HepG2 (cell line): ENCODE measurements at regions of chr6 and their contacts with region 1.

Region 1: DNA sequence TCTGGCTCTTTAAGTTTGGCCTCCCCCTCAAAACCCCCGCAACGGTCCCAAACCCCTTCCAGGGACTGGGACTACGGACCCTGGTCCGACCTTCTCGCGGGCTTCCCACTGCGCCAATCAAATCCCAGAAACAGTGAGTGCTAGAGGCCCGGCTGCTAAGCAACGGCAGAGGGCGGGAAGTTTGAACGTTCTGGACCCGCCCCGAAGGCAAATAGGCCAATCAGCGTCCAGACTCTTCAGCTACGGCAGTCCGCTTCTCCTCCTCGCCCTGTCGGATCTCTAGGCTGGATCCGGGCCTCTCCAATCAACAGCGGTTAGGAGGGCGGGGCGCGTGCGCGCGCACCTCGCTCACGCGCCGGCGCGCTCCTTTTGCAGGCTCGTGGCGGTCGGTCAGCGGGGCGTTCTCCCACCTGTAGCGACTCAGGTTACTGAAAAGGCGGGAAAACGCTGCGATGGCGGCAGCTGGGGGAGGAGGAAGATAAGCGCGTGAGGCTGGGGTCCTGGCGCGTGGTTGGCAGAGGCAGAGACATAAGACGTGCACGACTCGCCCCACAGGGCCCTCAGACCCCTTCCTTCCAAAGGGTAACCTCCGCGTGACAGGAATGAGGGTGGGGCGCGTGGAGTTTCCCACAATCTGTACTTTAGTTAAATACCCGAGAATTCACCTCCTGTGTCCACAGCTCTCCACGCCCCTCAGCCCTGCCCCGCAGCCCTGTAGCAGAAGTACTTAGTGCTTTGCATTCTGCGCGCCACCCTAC is at the start of gene MSH5:
- DNase-seq: peak; percentile 100
- ATAC-seq: peak; percentile 74
- H3K4me3 ChIP-seq: peak within 1 kb of the TSS; percentile 44 to 92 (median 92)
- H3K27ac ChIP-seq: peak within 1 kb of the TSS; percentile 99
- H3K4me1 ChIP-seq: peaks cover 50% of the 10 kb centered on the region
- H3K27me3 ChIP-seq: no peaks in the 10 kb centered on the region; a peak in 1 of 5 replicates
- CTCF ChIP-seq: no peak
- EP300 ChIP-seq: no peak; a peak in 1 of 4 replicates
- POLR2A ChIP-seq: peak in 1 of 2 experiments; percentile 45; a peak in 2 of 4 replicates
- RAD21 ChIP-seq: peak; percentile 51
- total RNA-seq, gene MSH5: 2.5 and 10.2 TPM in 2 replicates

Region 2: GRCh38 chr6:31680840-31681671 is 58.8 kb before region 1 on chr6 and contains the start of gene LY6G5C:
- CTCF ChIA-PET with region 1: no interaction called
- POLR2A ChIA-PET with region 1: interaction called, 13 read pairs
- in situ Hi-C with region 1: no loop called
- intact Hi-C with region 1: no loop called
- DNase-seq: peak; percentile 72
- ATAC-seq: peak; percentile 67
- H3K4me3 ChIP-seq: peak within 1 kb of the TSS in 1 of 3 experiments; percentile 22; a peak in 1 of 6 replicates
- H3K27ac ChIP-seq: no peak within 1 kb of the TSS
- H3K4me1 ChIP-seq: peaks cover 26% of the 10 kb centered on the region
- H3K27me3 ChIP-seq: no peaks in the 10 kb centered on the region
- CTCF ChIP-seq: peak; percentile 97
- EP300 ChIP-seq: no peak
- POLR2A ChIP-seq: no peak
- RAD21 ChIP-seq: peak; percentile 97
- total RNA-seq, gene LY6G5C: 0.33 TPM in 1 of 2 replicates, not detected in the other

Region 3: GRCh38 chr6:31729515-31729978 is 10.3 kb before region 1 on chr6:
- CTCF ChIA-PET with region 1: interaction called, 4 read pairs
- POLR2A ChIA-PET with region 1: interaction called, 122 read pairs
- in situ Hi-C with region 1: no loop called
- intact Hi-C with region 1: loop called (anchors 1 kb)
- DNase-seq: peak; percentile 86
- ATAC-seq: peak; percentile 77
- H3K4me3 ChIP-seq: peak overlapping the region; percentile 60 to 79 (median 72)
- H3K27ac ChIP-seq: peak overlapping the region; percentile 72
- H3K4me1 ChIP-seq: peaks cover 56% of the 10 kb centered on the region
- H3K27me3 ChIP-seq: no peaks in the 10 kb centered on the region
- CTCF ChIP-seq: peak; percentile 96
- EP300 ChIP-seq: 0 out of 4 replicates have a peak, but pooled peaks of 1 of the 2 experiments have one; percentile 4
- POLR2A ChIP-seq: peak in 1 of 2 experiments; percentile 74; a peak in 2 of 4 replicates
- RAD21 ChIP-seq: peak; percentile 99

Region 4: GRCh38 chr6:31776989-31777666 is 37.3 kb after region 1 on chr6 and contains the start of gene VWA7:
- CTCF ChIA-PET with region 1: no interaction called
- POLR2A ChIA-PET with region 1: interaction called, 279 read pairs
- in situ Hi-C with region 1: no loop called
- intact Hi-C with region 1: no loop called
- DNase-seq: peak; percentile 85
- ATAC-seq: peak; percentile 65
- H3K4me3 ChIP-seq: peak within 1 kb of the TSS; percentile 45 to 72 (median 48)
- H3K27ac ChIP-seq: peak within 1 kb of the TSS; percentile 70
- H3K4me1 ChIP-seq: peaks cover 57% of the 10 kb centered on the region
- H3K27me3 ChIP-seq: no peaks in the 10 kb centered on the region
- CTCF ChIP-seq: peak; percentile 26
- EP300 ChIP-seq: peak in 1 of 2 experiments; percentile 45; a peak in 1 of 4 replicates
- POLR2A ChIP-seq: no peak; a peak in 1 of 4 replicates
- RAD21 ChIP-seq: no peak
- total RNA-seq, gene VWA7: 0.79 and 0.86 TPM in 2 replicates

Region 5: GRCh38 chr6:31822036-31822821 is 82.4 kb after region 1 on chr6:
- CTCF ChIA-PET with region 1: no interaction called
- POLR2A ChIA-PET with region 1: interaction called, 102 read pairs
- in situ Hi-C with region 1: no loop called
- intact Hi-C with region 1: no loop called
- DNase-seq: peak; percentile 67
- ATAC-seq: peak; percentile 47
- H3K4me3 ChIP-seq: peak overlapping the region; percentile 67 to 91 (median 87)
- H3K27ac ChIP-seq: peak overlapping the region; percentile 86
- H3K4me1 ChIP-seq: peaks cover 67% of the 10 kb centered on the region
- H3K27me3 ChIP-seq: no peaks in the 10 kb centered on the region
- CTCF ChIP-seq: 0 out of 2 replicates have a peak, but pooled peaks have one; percentile 13
- EP300 ChIP-seq: peak in 1 of 2 experiments; percentile 65; a peak in 2 of 4 replicates
- POLR2A ChIP-seq: peak in 1 of 2 experiments; percentile 33; a peak in 2 of 4 replicates
- RAD21 ChIP-seq: no peak

Region 6: GRCh38 chr6:31862344-31863227 is 122.8 kb after region 1 on chr6 and contains the start of gene NEU1:
- CTCF ChIA-PET with region 1: no interaction called
- POLR2A ChIA-PET with region 1: interaction called, 40 read pairs
- in situ Hi-C with region 1: no loop called
- intact Hi-C with region 1: no loop called
- DNase-seq: peak; percentile 100
- ATAC-seq: peak; percentile 81
- H3K4me3 ChIP-seq: peak within 1 kb of the TSS; percentile 75 to 99 (median 84)
- H3K27ac ChIP-seq: peak within 1 kb of the TSS; percentile 92
- H3K4me1 ChIP-seq: peaks cover 68% of the 10 kb centered on the region
- H3K27me3 ChIP-seq: no peaks in the 10 kb centered on the region; a peak in 1 of 5 replicates
- CTCF ChIP-seq: peak; percentile 20
- EP300 ChIP-seq: peak in 1 of 2 experiments; percentile 49; a peak in 2 of 4 replicates
- POLR2A ChIP-seq: peak in 1 of 2 experiments; percentile 100; a peak in 2 of 4 replicates
- RAD21 ChIP-seq: peak; percentile 78
- total RNA-seq, gene NEU1: 139 and 297 TPM in 2 replicates